ENCODE measurements at regions of chr14 and their contacts with region 1.

Region 1: GRCh38 chr14:75293920-75294642 is 15.5 kb downstream of the FOS start:
- DNase-seq: peak; percentile 95
- ATAC-seq: peak; percentile 83
- H3K4me3 Mint-ChIP-seq: peak overlapping the region; percentile 78
- H3K27ac Mint-ChIP-seq: peak overlapping the region; percentile 90
- H3K4me1 Mint-ChIP-seq: peaks cover 24% of the 10 kb centered on the region
- H3K27me3 Mint-ChIP-seq: peaks cover 17% of the 10 kb centered on the region

Region 2: GRCh38 chr14:75088574-75089373 is 205.3 kb before region 1 on chr14:
- CTCF ChIA-PET with region 1: no interaction called
- POLR2A ChIA-PET with region 1: no interaction called
- DNase-seq: peak; percentile 65
- ATAC-seq: peak; percentile 69
- H3K4me3 Mint-ChIP-seq: no peak overlapping the region
- H3K27ac Mint-ChIP-seq: no peak overlapping the region
- H3K4me1 Mint-ChIP-seq: no peaks in the 10 kb centered on the region
- H3K27me3 Mint-ChIP-seq: no peaks in the 10 kb centered on the region

Region 3: GRCh38 chr14:75126679-75127473 is 167.2 kb before region 1 on chr14 and contains the start of gene NEK9:
- CTCF ChIA-PET with region 1: interaction called, 216 read pairs
- POLR2A ChIA-PET with region 1: interaction called, 9 read pairs
- DNase-seq: peak; percentile 93
- ATAC-seq: peak; percentile 94
- H3K4me3 Mint-ChIP-seq: peak within 1 kb of the TSS; percentile 98
- H3K27ac Mint-ChIP-seq: peak within 1 kb of the TSS; percentile 97
- H3K4me1 Mint-ChIP-seq: peaks cover 45% of the 10 kb centered on the region
- H3K27me3 Mint-ChIP-seq: no peaks in the 10 kb centered on the region
- total RNA-seq, gene NEK9: 73.7 to 80.0 TPM

Region 4: DNA sequence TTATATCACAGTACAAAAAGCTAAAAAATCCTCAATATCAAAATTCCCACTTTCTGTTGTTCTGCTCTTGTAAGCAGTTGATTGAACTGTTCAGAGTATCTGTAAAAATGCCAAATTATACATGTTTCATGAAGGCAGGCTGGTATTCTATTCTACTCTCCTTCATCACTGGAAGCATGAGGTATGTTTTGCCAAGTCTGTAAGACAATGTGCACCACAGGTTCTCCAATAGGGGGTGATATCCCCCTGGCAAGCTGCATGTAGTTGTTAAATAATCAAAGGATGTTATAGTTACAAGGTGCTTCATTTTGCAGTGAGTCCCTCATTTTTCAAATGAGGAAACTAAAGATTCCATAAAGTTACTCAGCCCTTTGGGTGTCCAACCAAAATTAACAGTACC is 152.1 kb before region 1 on chr14:
- CTCF ChIA-PET with region 1: interaction called, 86 read pairs
- POLR2A ChIA-PET with region 1: interaction called, 4 read pairs
- DNase-seq: peak; percentile 49
- ATAC-seq: peak; percentile 51
- H3K4me3 Mint-ChIP-seq: no peak overlapping the region
- H3K27ac Mint-ChIP-seq: no peak overlapping the region
- H3K4me1 Mint-ChIP-seq: peaks cover 71% of the 10 kb centered on the region
- H3K27me3 Mint-ChIP-seq: no peaks in the 10 kb centered on the region

Region 5: GRCh38 chr14:75191100-75191499 is 103.0 kb before region 1 on chr14:
- CTCF ChIA-PET with region 1: no interaction called
- POLR2A ChIA-PET with region 1: no interaction called
- DNase-seq: no peak
- ATAC-seq: no peak
- H3K4me3 Mint-ChIP-seq: no peak overlapping the region
- H3K27ac Mint-ChIP-seq: no peak overlapping the region
- H3K4me1 Mint-ChIP-seq: no peaks in the 10 kb centered on the region
- H3K27me3 Mint-ChIP-seq: peaks cover 14% of the 10 kb centered on the region

Region 6: GRCh38 chr14:75234173-75235115 is 59.6 kb before region 1 on chr14:
- CTCF ChIA-PET with region 1: interaction called, 11 read pairs
- POLR2A ChIA-PET with region 1: no interaction called
- DNase-seq: no peak
- ATAC-seq: no peak
- H3K4me3 Mint-ChIP-seq: no peak overlapping the region
- H3K27ac Mint-ChIP-seq: no peak overlapping the region
- H3K4me1 Mint-ChIP-seq: peaks cover 31% of the 10 kb centered on the region
- H3K27me3 Mint-ChIP-seq: peaks cover 17% of the 10 kb centered on the region

Region 7: DNA sequence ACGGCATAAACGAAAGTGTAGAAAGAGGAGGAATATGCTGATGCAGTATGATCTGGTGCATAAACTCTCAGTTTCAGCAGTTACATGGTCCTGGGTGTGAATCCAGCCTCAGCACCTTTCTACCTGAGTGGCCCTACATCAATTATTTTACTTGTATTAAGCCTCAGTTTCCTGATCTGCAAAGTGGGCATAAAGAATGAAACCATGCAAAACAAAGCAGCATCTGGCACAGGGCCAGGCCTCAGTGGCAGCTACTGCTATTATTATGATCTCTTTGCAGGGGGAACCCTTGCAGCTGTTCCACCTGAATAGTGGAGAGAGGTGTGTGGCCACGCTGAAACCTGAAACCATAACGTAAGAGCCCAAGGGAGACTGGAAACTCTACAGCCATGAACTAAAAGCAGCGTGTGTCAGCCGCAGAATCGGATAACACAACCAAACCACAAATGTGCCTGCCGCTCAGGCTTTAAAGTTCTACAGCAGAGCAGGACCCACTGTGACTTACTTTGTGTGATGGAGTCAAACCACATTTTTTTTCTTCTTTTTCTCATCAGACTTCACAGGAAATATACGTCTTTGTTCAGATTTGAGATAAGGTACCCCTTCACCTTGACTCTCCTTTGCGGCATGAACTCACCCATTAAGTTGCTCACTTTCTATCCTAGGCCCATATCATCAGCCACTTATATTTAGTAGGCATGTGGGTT is 44.7 kb before region 1 on chr14:
- CTCF ChIA-PET with region 1: interaction called, 10 read pairs
- POLR2A ChIA-PET with region 1: no interaction called
- DNase-seq: peak; percentile 95
- ATAC-seq: peak; percentile 82
- H3K4me3 Mint-ChIP-seq: peak overlapping the region; percentile 44
- H3K27ac Mint-ChIP-seq: peak overlapping the region; percentile 87
- H3K4me1 Mint-ChIP-seq: peaks cover 57% of the 10 kb centered on the region
- H3K27me3 Mint-ChIP-seq: peaks cover 21% of the 10 kb centered on the region

Region 8: GRCh38 chr14:75283162-75283881 is 10.8 kb before region 1 on chr14:
- CTCF ChIA-PET with region 1: interaction called, 28 read pairs
- POLR2A ChIA-PET with region 1: interaction called, 7 read pairs
- DNase-seq: no peak
- ATAC-seq: peak; percentile 19
- H3K4me3 Mint-ChIP-seq: no peak overlapping the region
- H3K27ac Mint-ChIP-seq: no peak overlapping the region
- H3K4me1 Mint-ChIP-seq: peaks cover 22% of the 10 kb centered on the region
- H3K27me3 Mint-ChIP-seq: peaks cover 55% of the 10 kb centered on the region